Sciatic nerve (tissue), 2 donors: ENCODE measurements at regions of chr2 and their contacts with region 1.

Region 1: GRCh38 chr2:235002198-235003095 is 50.6 kb downstream of the SH3BP4 start:
- DNase-seq: no peak
- ATAC-seq: peak; percentile 19

Region 2: DNA sequence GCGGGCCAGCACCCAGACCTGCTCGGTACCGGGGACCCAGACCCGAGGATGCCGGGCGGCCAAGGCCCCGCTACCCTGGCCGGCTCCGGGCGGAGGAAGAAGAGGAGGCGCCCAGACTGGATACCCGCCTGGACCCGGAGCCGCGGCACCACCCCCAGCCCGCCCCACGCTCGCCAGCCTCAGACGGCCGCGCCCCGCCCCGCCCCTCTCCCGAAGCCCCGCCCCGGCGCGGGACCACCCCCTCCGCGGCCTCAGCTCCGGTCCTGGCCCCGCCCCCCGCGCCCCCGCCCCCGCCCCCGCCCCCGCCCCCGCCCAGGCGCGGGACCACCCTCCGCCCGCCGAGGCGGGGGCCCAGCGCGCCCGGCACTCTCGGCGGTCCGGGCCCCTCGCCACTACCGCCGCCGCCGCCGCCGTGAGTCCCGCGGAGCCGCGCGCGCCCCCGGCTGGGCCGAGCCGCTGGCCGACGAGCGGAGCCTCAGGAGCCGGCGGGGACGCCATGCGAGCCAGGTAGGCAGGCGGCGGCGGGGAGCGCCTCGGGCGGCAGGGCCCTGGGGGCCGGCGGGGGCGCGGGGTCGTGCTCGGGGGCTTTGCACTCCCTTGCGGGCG is 50.7 kb before region 1 on chr2 and contains the start of gene SH3BP4:
- intact Hi-C with region 1: no loop called
- DNase-seq: peak; percentile 90
- ATAC-seq: peak; percentile 92
- total RNA-seq, gene SH3BP4: 26.7 TPM

Region 3: DNA sequence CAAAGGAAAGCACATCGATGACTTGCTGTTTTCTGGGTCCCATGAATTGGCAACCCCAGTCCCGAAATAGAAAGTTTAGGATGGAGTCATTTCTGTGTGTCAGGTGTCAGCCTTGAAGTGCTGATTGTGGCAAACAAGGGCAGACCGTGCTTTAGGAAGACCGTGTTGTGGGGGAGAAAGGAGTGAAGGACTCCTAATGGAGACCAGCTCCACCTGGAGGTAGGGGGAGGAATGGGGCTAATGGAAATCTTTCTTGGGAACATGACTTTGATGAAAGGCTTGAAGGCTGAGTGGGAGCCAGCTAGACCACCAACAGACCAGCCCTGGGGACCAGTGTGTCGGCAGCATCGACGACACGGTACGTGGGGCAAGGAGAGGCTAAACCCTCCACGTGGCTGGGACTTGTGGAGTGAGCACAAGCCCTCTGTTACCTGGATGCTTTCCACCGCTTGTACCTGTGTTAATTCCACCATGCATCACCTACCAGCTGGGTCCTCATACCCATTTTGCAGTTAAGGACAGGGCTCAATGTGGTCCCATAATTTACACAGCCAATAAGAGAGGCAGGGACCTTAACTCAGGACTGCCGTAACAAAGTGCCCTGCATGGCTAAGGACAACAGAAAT is 53.6 kb after region 1 on chr2:
- intact Hi-C with region 1: loop called (anchors 5 kb)
- DNase-seq: no peak
- ATAC-seq: peak; percentile 38